ENCODE measurements at regions of chr12 and their contacts with region 1.

Region 1: GRCh38 chr12:103965590-103966504 is at the start of gene TDG:
- DNase-seq: peak; percentile 81 to 97 (median 95)
- ATAC-seq: peak; percentile 97
- H3K4me3 ChIP-seq: peak within 1 kb of the TSS; percentile 87
- H3K4me3 Mint-ChIP-seq: peak within 1 kb of the TSS; percentile 92 to 99 (median 97)
- H3K27ac ChIP-seq: peak within 1 kb of the TSS; percentile 94
- H3K27ac Mint-ChIP-seq: peak within 1 kb of the TSS; percentile 96 to 100 (median 99)
- H3K4me1 ChIP-seq: peaks cover 31 to 41% of the 10 kb centered on the region in 2 donors
- H3K4me1 Mint-ChIP-seq: peaks cover 34 to 68% (median 57%) of the 10 kb centered on the region in 7 donors
- H3K27me3 ChIP-seq: no peaks in the 10 kb centered on the region
- H3K27me3 Mint-ChIP-seq: no peaks in the 10 kb centered on the region
- total RNA-seq, gene TDG: 21.5 to 43.0 (median 35.5) TPM

Region 2: GRCh38 chr12:103884316-103884715 is 81.5 kb before region 1 on chr12:
- CTCF ChIA-PET with region 1: interaction called, 6 read pairs
- POLR2A ChIA-PET with region 1: interaction called, 3 read pairs
- intact Hi-C with region 1: loop called in 1 of 2 experiments (anchors 1 kb)
- DNase-seq: peak in 7 of 9 donors; percentile 36 to 68 (median 53)
- ATAC-seq: peak; percentile 68
- H3K4me3 ChIP-seq: no peak overlapping the region
- H3K4me3 Mint-ChIP-seq: peak overlapping the region in 3 of 10 donors; percentile 30 to 64 (median 39)
- H3K27ac ChIP-seq: no peak overlapping the region
- H3K27ac Mint-ChIP-seq: peak overlapping the region in 6 of 9 donors; percentile 19 to 74 (median 46)
- H3K4me1 ChIP-seq: no peaks in the 10 kb centered on the region
- H3K4me1 Mint-ChIP-seq: peaks cover 4 to 24% (median 16%) of the 10 kb centered on the region in 7 donors
- H3K27me3 ChIP-seq: no peaks in the 10 kb centered on the region
- H3K27me3 Mint-ChIP-seq: no peaks in the 10 kb centered on the region

Region 3: GRCh38 chr12:103936679-103937078 is 29.2 kb before region 1 on chr12:
- CTCF ChIA-PET with region 1: interaction called, 5 read pairs
- POLR2A ChIA-PET with region 1: interaction called, 124 read pairs
- intact Hi-C with region 1: no loop called
- DNase-seq: no peak
- ATAC-seq: no peak
- H3K4me3 ChIP-seq: no peak overlapping the region
- H3K4me3 Mint-ChIP-seq: peak overlapping the region in 2 of 10 donors; percentile 2 to 20
- H3K27ac ChIP-seq: peak overlapping the region; percentile 22
- H3K27ac Mint-ChIP-seq: peak overlapping the region in 4 of 9 donors; percentile 49 to 65 (median 54)
- H3K4me1 ChIP-seq: peaks cover 26 to 31% of the 10 kb centered on the region in 2 donors
- H3K4me1 Mint-ChIP-seq: peaks cover 29 to 61% (median 53%) of the 10 kb centered on the region in 7 donors
- H3K27me3 ChIP-seq: no peaks in the 10 kb centered on the region
- H3K27me3 Mint-ChIP-seq: no peaks in the 10 kb centered on the region

Region 4: GRCh38 chr12:104011261-104011660 is 45.4 kb after region 1 on chr12:
- CTCF ChIA-PET with region 1: no interaction called
- POLR2A ChIA-PET with region 1: no interaction called
- intact Hi-C with region 1: no loop called
- DNase-seq: no peak
- ATAC-seq: no peak
- H3K4me3 ChIP-seq: no peak overlapping the region
- H3K4me3 Mint-ChIP-seq: no peak overlapping the region
- H3K27ac ChIP-seq: no peak overlapping the region
- H3K27ac Mint-ChIP-seq: no peak overlapping the region
- H3K4me1 ChIP-seq: no peaks in the 10 kb centered on the region
- H3K4me1 Mint-ChIP-seq: no peaks in the 10 kb centered on the region
- H3K27me3 ChIP-seq: no peaks in the 10 kb centered on the region
- H3K27me3 Mint-ChIP-seq: peaks cover 0 to 24% (median 4%) of the 10 kb centered on the region in 5 donors

Region 5: GRCh38 chr12:104064031-104064822 is 98.4 kb after region 1 on chr12 and contains the start of gene HCFC2:
- CTCF ChIA-PET with region 1: no interaction called
- POLR2A ChIA-PET with region 1: interaction called, 9 read pairs
- intact Hi-C with region 1: loop called in 1 of 2 experiments (anchors 1 kb)
- DNase-seq: peak; percentile 77 to 93 (median 83)
- ATAC-seq: peak; percentile 99
- H3K4me3 ChIP-seq: peak within 1 kb of the TSS; percentile 95
- H3K4me3 Mint-ChIP-seq: peak within 1 kb of the TSS; percentile 88 to 97 (median 94)
- H3K27ac ChIP-seq: peak within 1 kb of the TSS; percentile 79
- H3K27ac Mint-ChIP-seq: peak within 1 kb of the TSS; percentile 71 to 96 (median 90)
- H3K4me1 ChIP-seq: peaks cover 5 to 9% of the 10 kb centered on the region in 2 donors
- H3K4me1 Mint-ChIP-seq: peaks cover 13 to 31% (median 21%) of the 10 kb centered on the region in 7 donors
- H3K27me3 ChIP-seq: no peaks in the 10 kb centered on the region
- H3K27me3 Mint-ChIP-seq: peaks cover 5 to 27% (median 13%) of the 10 kb centered on the region in 5 donors
- total RNA-seq, gene HCFC2: 11.4 to 20.2 (median 16.2) TPM

Region 6: DNA sequence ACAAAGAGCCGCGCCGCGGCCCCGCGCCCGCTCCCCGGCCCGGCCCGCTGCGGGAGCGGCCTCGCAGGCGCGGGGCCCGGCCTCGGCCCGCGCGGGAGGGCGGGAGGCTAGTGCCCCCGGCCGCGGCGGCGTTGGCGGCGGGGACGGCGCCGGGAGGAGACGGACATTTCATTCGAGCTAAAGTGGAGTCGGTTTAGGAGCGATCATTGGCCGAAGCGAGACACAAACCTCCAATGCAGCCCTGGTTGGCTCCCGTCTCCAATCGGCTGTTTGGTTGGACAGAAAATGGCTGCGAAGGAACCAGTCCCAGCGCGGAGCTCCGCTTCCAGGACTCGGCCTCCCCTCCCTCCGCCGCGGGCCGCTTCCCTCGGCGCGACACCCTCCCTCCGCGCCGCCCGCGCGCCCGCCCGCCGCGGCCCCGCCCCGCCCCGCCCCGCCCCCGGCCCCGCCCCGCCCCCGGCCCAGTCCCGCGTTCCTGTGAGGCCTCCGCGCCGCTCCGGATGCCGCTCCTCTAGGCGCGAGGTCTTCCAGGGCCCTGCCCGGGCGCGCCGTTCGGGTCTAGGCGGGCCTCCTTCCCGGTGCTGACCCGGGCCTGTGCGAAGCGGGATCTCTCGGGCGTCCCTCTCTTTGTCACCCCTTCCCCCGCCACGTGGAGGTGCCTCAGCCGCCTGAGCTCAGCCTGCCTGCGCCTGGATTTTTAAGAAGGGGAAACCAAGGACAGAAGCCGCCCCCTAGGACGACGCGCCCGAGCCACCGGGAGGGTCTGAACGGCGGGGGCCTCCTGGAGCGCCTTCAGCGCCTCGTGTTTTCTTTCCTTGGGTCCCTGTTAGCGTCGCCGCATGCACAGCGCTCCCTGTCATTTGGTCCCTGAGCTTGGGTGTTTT is 172.3 kb after region 1 on chr12 and contains the start of gene NFYB:
- CTCF ChIA-PET with region 1: no interaction called
- POLR2A ChIA-PET with region 1: interaction called, 12 read pairs
- intact Hi-C with region 1: loop called in 1 of 2 experiments (anchors 2 kb)
- DNase-seq: peak; percentile 90 to 96 (median 94)
- ATAC-seq: peak; percentile 97
- H3K4me3 ChIP-seq: peak within 1 kb of the TSS; percentile 69
- H3K4me3 Mint-ChIP-seq: peak within 1 kb of the TSS; percentile 81 to 93 (median 90)
- H3K27ac ChIP-seq: peak within 1 kb of the TSS; percentile 72
- H3K27ac Mint-ChIP-seq: peak within 1 kb of the TSS; percentile 71 to 95 (median 89)
- H3K4me1 ChIP-seq: peaks cover 10 to 23% of the 10 kb centered on the region in 2 donors
- H3K4me1 Mint-ChIP-seq: peaks cover 0 to 22% (median 9%) of the 10 kb centered on the region in 7 donors
- H3K27me3 ChIP-seq: no peaks in the 10 kb centered on the region
- H3K27me3 Mint-ChIP-seq: peaks cover 0 to 24% (median 0%) of the 10 kb centered on the region in 5 donors
- total RNA-seq, gene NFYB: 11.6 to 25.9 (median 24.4) TPM

Region 7: GRCh38 chr12:104189915-104190555 is 224.2 kb after region 1 on chr12:
- CTCF ChIA-PET with region 1: no interaction called
- POLR2A ChIA-PET with region 1: no interaction called
- intact Hi-C with region 1: no loop called
- DNase-seq: no peak
- ATAC-seq: no peak
- H3K4me3 ChIP-seq: no peak overlapping the region
- H3K4me3 Mint-ChIP-seq: no peak overlapping the region
- H3K27ac ChIP-seq: no peak overlapping the region
- H3K27ac Mint-ChIP-seq: peak overlapping the region in 1 of 9 donors; percentile 37
- H3K4me1 ChIP-seq: no peaks in the 10 kb centered on the region
- H3K4me1 Mint-ChIP-seq: no peaks in the 10 kb centered on the region
- H3K27me3 ChIP-seq: no peaks in the 10 kb centered on the region
- H3K27me3 Mint-ChIP-seq: peaks cover 0 to 15% (median 0%) of the 10 kb centered on the region in 5 donors

Region 8: GRCh38 chr12:105235732-105236476 is 1270.1 kb after region 1 on chr12 and contains the start of gene APPL2:
- CTCF ChIA-PET with region 1: no interaction called
- POLR2A ChIA-PET with region 1: no interaction called
- intact Hi-C with region 1: loop called in 1 of 2 experiments (anchors 2 kb)
- DNase-seq: peak; percentile 52 to 81 (median 71)
- ATAC-seq: peak; percentile 86
- H3K4me3 ChIP-seq: peak within 1 kb of the TSS; percentile 71
- H3K4me3 Mint-ChIP-seq: peak within 1 kb of the TSS in 9 of 10 donors; percentile 89 to 95 (median 93)
- H3K27ac ChIP-seq: peak within 1 kb of the TSS; percentile 78
- H3K27ac Mint-ChIP-seq: peak within 1 kb of the TSS; percentile 86 to 96 (median 91)
- H3K4me1 ChIP-seq: peaks cover 25 to 39% of the 10 kb centered on the region in 2 donors
- H3K4me1 Mint-ChIP-seq: peaks cover 42 to 54% (median 48%) of the 10 kb centered on the region in 7 donors
- H3K27me3 ChIP-seq: no peaks in the 10 kb centered on the region
- H3K27me3 Mint-ChIP-seq: peaks cover 0 to 3% (median 0%) of the 10 kb centered on the region in 5 donors
- total RNA-seq, gene APPL2: 31.6 to 74.5 (median 58.3) TPM